Activated CD4-positive, alpha-beta T cell treated with anti-CD3 and anti-CD28 coated beads, Interleukin-2, amount 10 ng/mL, durations not matched to agents 24 days and 14 days (primary cell): ENCODE measurements at regions of chr10 and their contacts with region 1.

Region 1: DNA sequence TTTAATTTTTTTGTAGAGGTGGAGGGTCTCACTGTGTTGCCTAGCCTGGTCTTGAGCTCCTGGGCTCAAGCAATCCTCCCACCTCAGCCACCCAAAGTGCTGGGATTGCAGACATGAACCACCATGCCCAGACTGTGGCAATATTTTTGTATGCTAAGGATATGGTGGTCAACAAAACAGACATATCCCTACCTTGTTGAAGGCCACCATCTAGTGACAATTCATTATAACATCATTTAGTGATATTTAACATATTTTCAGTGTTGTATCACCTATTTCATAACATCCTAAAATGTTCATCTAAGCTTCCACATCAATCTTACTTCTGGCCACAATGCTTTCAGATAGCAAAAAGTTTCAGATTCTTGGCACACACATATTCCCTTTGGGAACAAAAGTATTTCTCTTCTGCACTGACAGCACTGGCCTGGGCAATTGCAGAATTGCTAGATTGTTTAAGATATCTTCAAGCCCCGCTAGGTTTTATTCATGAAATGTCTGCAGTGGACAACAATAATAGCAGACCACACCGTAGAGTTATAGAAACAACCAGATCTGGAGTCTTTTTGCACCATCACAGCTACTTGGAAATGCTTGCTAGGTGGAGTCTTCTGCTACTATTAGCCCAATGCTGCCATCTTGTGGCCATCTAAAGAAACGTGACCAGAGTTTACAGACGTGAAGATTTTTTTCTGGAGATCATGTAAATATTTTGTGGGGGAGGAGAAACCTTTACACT is 58.4 kb downstream of the DNAJC12 start:
- DNase-seq: peak; percentile 93
- H3K4me3 Mint-ChIP-seq: no peak overlapping the region
- H3K27ac Mint-ChIP-seq: peak overlapping the region; percentile 5
- H3K4me1 Mint-ChIP-seq: peaks cover 32% of the 10 kb centered on the region
- H3K27me3 Mint-ChIP-seq: no peaks in the 10 kb centered on the region

Region 2: GRCh38 chr10:67306588-67307205 is 472.9 kb before region 1 on chr10:
- intact Hi-C with region 1: loop called (anchors 5 kb)
- DNase-seq: no peak
- H3K4me3 Mint-ChIP-seq: no peak overlapping the region
- H3K27ac Mint-ChIP-seq: no peak overlapping the region
- H3K4me1 Mint-ChIP-seq: no peaks in the 10 kb centered on the region
- H3K27me3 Mint-ChIP-seq: no peaks in the 10 kb centered on the region

Region 3: DNA sequence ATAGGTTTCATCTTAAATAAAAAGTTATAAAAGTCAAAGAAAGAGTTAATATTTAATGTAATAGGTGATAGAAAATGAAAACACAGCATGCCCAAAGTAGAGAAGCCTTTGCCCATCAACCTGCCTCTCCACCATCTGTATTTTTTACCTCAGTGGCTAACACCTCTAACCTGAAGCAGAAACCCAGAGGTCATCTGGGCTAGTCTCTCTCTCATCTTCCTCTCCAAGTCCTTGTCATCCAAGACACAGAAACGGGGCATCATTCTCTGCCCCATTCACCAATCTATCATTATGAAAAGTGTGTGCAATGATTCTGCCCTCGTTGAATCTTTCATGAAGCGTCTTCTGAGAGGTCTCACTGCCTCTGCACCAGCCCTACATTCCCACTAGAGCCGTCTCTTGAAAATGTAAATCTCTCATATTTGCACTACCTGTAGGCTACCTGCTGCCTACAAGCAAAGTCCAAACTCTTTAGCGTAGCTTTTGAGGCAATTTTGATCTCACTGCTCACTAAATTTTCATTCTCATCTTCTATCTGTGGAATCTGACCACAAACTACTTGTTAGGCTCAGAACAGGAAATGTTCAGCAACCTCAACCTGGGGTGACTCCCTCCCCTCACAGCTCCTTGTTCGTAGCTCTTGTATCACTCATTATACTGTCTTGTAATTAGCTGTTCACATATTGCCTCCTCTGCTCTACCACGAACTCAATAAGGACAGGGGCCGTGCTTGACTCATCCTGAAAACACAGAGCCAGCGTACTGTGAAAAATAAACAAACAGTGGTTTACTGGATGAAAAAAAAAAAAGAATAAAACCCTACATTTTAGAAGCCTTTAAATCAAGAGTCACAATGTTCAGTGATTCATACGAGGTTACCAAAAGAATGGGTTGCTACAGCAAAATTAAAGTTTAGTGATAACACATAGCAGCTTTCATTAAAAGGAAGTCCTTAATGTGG is 166.8 kb before region 1 on chr10:
- intact Hi-C with region 1: loop called (anchors 5 kb)
- DNase-seq: peak; percentile 91
- H3K4me3 Mint-ChIP-seq: peak overlapping the region; percentile 69
- H3K27ac Mint-ChIP-seq: peak overlapping the region; percentile 65
- H3K4me1 Mint-ChIP-seq: peaks cover 25% of the 10 kb centered on the region
- H3K27me3 Mint-ChIP-seq: peaks cover 19% of the 10 kb centered on the region

Region 4: GRCh38 chr10:67697724-67698131 is 81.9 kb before region 1 on chr10:
- intact Hi-C with region 1: loop called (anchors 1 kb)
- DNase-seq: peak; percentile 80
- H3K4me3 Mint-ChIP-seq: no peak overlapping the region
- H3K27ac Mint-ChIP-seq: no peak overlapping the region
- H3K4me1 Mint-ChIP-seq: peaks cover 2% of the 10 kb centered on the region
- H3K27me3 Mint-ChIP-seq: peaks cover 39% of the 10 kb centered on the region